ENCODE measurements at regions of chr1 and their contacts with region 1.

Region 1: DNA sequence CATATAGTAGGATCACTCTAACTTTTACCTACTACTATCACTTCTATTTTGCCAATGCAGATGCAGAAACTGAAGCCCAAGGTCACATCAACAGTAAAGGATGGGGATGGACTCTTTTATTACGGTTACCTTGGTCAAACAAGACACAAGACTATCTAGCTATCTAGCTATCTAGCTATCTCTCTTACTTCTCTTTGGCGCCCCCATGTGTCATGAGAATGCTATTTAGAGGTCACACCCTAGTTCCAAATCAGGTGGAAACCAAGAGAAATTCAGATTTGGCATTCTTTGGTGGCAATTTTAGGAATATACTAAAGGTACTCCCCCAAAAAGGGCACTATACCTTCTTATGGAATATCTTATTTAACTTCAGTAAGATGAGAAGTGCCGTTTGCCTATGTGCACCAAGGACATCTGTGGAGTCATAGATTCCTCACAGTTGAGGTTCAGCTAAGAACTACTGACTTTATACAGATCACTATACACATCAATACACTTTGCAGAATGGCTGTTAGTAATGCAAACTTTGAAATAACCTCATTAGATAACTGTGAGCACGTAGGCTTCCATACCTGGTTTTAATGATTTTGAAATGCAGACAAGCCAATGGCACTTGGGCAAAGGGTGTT is 6.7 kb downstream of the ZNF648 start:
- DNase-seq: peak; percentile 36 to 67 (median 61)
- H3K4me3 ChIP-seq: no peak overlapping the region
- H3K27ac ChIP-seq: no peak overlapping the region
- H3K4me1 ChIP-seq: peaks cover 0 to 5% (median 2%) of the 10 kb centered on the region in 4 experiments
- H3K27me3 ChIP-seq: peaks cover 0 to 37% (median 19%) of the 10 kb centered on the region in 5 experiments

Region 2: DNA sequence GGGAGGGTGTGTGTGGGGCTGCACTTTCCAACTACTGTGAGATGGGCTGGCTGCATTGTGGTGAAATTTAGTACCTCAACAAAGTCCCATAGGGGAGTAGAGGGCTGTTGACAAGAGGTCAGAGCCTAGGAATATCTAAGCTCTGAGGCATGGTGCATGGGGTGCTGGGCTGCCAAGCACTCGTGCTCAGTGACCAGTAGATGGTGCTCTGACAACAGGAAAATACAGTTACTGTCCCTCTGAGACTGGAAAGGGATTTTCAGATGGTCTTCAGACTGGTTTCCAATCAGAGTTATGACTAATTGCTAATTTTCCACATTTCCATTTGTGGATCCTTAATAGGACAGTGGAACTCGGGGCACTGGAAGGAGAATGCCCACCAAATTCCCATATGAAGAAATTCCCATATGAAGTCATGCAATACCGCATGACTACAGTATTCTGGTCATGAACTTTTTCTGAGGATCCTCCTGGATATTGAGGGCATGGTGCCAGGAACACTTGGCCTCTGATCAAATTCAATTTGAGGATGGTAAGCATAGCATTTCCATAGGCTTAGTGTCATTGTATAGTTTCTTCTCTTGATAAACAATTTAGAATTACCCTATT is 575.6 kb before region 1 on chr1:
- CTCF ChIA-PET with region 1: interaction called, 44 read pairs
- POLR2A ChIA-PET with region 1: no interaction called
- DNase-seq: peak; percentile 49 to 72 (median 64)
- H3K4me3 ChIP-seq: no peak overlapping the region
- H3K27ac ChIP-seq: no peak overlapping the region
- H3K4me1 ChIP-seq: peaks cover 0 to 17% (median 9%) of the 10 kb centered on the region in 4 experiments
- H3K27me3 ChIP-seq: peaks cover 0 to 83% (median 14%) of the 10 kb centered on the region in 5 experiments

Region 3: DNA sequence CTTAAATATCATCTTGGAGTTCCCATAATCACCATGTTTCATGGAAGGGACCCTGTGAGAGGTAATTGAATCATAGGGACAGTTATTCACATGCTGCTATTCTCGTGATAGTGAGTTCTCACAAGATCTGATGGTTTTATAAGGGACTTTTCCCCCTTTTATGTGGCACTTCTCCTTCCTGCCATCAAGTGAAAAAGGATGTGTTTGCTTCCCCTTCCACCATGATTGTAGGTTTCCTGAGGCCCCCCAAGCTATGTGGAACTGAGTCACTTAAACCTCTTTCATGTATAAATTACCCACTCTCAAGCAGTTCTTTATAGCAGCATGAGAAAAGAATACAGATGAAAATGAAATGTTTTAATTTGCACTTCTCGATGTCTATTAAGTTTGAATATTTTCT is 105.3 kb before region 1 on chr1:
- CTCF ChIA-PET with region 1: no interaction called
- POLR2A ChIA-PET with region 1: no interaction called
- DNase-seq: no peak
- H3K4me3 ChIP-seq: no peak overlapping the region
- H3K27ac ChIP-seq: no peak overlapping the region
- H3K4me1 ChIP-seq: no peaks in the 10 kb centered on the region
- H3K27me3 ChIP-seq: no peaks in the 10 kb centered on the region

Measured in common myeloid progenitor, CD34-positive (primary cell).